ENCODE measurements at regions of chr3 and their contacts with region 1.

Region 1: GRCh38 chr3:143060906-143061305 is 58.7 kb upstream of the CHST2 start:
- DNase-seq: no peak
- ATAC-seq: peak; percentile 95
- H3K4me3 Mint-ChIP-seq: no peak overlapping the region
- H3K27ac Mint-ChIP-seq: peak overlapping the region; percentile 70
- H3K4me1 Mint-ChIP-seq: peaks cover 26% of the 10 kb centered on the region
- H3K27me3 Mint-ChIP-seq: no peaks in the 10 kb centered on the region

Region 2: GRCh38 chr3:142976621-142977398 is 84.1 kb before region 1 on chr3:
- CTCF ChIA-PET with region 1: no interaction called
- POLR2A ChIA-PET with region 1: no interaction called
- intact Hi-C with region 1: no loop called
- DNase-seq: no peak
- ATAC-seq: no peak
- H3K4me3 Mint-ChIP-seq: no peak overlapping the region
- H3K27ac Mint-ChIP-seq: no peak overlapping the region
- H3K4me1 Mint-ChIP-seq: no peaks in the 10 kb centered on the region
- H3K27me3 Mint-ChIP-seq: peaks cover 10% of the 10 kb centered on the region

Region 3: DNA sequence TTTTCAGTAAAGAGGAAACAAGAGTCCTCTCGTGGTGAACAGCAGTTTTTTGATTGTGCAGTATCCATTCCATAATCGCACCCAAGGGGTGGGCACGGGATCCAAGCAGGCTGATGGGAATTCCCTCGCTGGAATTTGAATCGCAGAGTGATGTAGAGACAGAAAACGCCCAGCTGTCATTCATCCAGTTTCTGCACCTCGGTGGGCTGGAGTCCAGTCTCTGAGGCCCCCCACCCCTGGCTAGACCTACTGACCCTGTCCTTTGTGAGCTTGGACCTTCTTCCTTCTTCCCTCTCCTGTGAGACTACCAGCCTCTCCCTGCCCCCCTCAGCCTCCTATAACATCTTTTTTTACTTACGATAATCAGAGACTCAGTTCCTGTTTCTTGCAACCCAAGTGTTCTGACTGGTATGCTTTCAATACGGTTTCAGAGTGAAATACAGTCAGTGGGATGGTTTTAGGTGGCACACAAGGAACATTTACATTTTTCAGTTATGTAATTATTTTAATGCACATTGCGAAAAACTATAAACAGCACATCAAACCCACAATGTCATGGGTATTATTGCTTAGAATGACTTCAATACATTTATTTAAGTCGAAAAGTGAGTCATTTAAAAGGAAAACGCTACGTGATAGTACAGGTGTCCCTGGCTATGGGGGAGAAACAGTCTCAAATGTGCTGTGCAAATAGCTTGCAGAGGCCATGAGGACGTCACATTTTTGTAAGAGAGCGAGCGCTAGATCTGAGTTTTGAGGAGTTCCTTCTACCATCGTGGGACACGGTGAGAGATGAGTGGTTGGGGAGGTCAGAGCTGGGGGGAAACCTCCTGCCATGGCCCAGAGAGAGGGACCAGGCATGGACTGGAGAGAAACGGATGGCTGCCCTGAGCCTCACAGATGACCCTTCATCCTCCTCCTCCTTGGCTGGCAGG is 21.2 kb after region 1 on chr3:
- CTCF ChIA-PET with region 1: interaction called, 6 read pairs
- POLR2A ChIA-PET with region 1: no interaction called
- intact Hi-C with region 1: loop called (anchors 1 kb)
- DNase-seq: peak; percentile 54
- ATAC-seq: peak; percentile 87
- H3K4me3 Mint-ChIP-seq: peak overlapping the region; percentile 75
- H3K27ac Mint-ChIP-seq: peak overlapping the region; percentile 98
- H3K4me1 Mint-ChIP-seq: peaks cover 36% of the 10 kb centered on the region
- H3K27me3 Mint-ChIP-seq: no peaks in the 10 kb centered on the region

Region 4: DNA sequence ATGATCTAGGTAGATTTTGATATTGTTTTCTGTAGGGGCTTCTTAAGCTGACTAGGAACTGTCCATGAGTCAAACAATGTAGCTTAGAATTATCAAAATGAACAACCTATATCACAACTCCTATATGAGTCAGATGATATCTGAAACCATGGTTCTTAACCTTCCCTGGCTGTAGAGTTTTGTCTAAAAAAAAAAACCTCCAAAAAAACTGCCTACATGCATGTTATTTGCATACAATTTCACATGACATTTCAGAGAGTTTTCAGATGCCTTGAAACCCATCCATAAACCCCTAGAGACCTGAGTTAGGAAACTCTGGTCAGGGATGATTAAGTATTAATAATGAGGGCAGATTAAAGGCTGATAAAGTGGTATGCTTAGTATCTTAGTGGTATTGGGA is 215.7 kb after region 1 on chr3:
- CTCF ChIA-PET with region 1: no interaction called
- POLR2A ChIA-PET with region 1: no interaction called
- intact Hi-C with region 1: loop called in 1 of 2 experiments (anchors 5 kb)
- DNase-seq: no peak
- ATAC-seq: peak; percentile 99
- H3K4me3 Mint-ChIP-seq: no peak overlapping the region
- H3K27ac Mint-ChIP-seq: no peak overlapping the region
- H3K4me1 Mint-ChIP-seq: peaks cover 23% of the 10 kb centered on the region
- H3K27me3 Mint-ChIP-seq: no peaks in the 10 kb centered on the region

Region 5: DNA sequence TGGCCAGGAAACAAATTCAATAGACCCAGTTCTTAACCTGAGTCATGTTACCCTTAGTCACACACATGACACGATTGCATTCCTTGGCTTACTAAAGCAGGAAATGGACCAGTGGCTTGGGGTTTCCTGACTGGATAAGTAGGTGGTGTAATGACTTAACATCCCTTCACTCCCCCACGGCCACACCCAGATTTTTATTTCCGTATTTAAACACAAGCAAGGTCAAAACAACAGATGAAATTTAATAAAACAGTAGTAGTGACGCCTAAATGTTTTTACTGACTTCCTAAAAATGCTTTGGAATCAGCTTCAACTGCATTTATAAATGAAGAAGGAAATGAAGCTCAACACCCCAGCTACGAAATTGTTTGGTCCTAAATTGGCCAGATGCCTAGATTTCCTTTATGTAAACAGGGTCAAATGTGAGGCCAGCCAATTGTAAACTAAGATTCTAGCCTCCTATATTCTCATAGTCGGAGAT is 383.0 kb after region 1 on chr3:
- CTCF ChIA-PET with region 1: no interaction called
- POLR2A ChIA-PET with region 1: no interaction called
- intact Hi-C with region 1: loop called in 1 of 2 experiments (anchors 10 kb)
- DNase-seq: peak; percentile 42
- ATAC-seq: peak; percentile 71
- H3K4me3 Mint-ChIP-seq: no peak overlapping the region
- H3K27ac Mint-ChIP-seq: peak overlapping the region; percentile 38
- H3K4me1 Mint-ChIP-seq: peaks cover 32% of the 10 kb centered on the region
- H3K27me3 Mint-ChIP-seq: no peaks in the 10 kb centered on the region

Measured in activated CD4-positive, alpha-beta T cell treated with anti-CD3 and anti-CD28 coated beads for 36 hours (primary cell).